ENCODE measurements at regions of chr21 and their contacts with region 1.

Region 1: GRCh38 chr21:40143822-40144525 is 276.7 kb downstream of the PCP4 start:
- DNase-seq: peak; percentile 38
- H3K4me3 Mint-ChIP-seq: no peak overlapping the region
- H3K27ac Mint-ChIP-seq: no peak overlapping the region
- H3K4me1 Mint-ChIP-seq: no peaks in the 10 kb centered on the region
- H3K27me3 Mint-ChIP-seq: no peaks in the 10 kb centered on the region
- CTCF ChIP-seq: peak; percentile 10

Region 2: GRCh38 chr21:41068967-41069642 is 925.1 kb after region 1 on chr21:
- CTCF ChIA-PET with region 1: interaction called, 4 read pairs
- intact Hi-C with region 1: loop called (anchors 5 kb)
- DNase-seq: peak; percentile 78
- H3K4me3 Mint-ChIP-seq: peak overlapping the region; percentile 49
- H3K27ac Mint-ChIP-seq: no peak overlapping the region
- H3K4me1 Mint-ChIP-seq: no peaks in the 10 kb centered on the region
- H3K27me3 Mint-ChIP-seq: peaks cover 50% of the 10 kb centered on the region
- CTCF ChIP-seq: peak; percentile 52

Measured in Calu3 (cell line).